Natural killer cell (primary cell): ENCODE measurements at regions of chr10 and their contacts with region 1.

Region 1: GRCh38 chr10:28179006-28179742 is 123.7 kb downstream of the MPP7 start:
- DNase-seq: peak in 1 of 2 donors; percentile 80
- ATAC-seq: peak; percentile 65 to 75 (median 71)
- H3K4me3 ChIP-seq: peak overlapping the region; percentile 24
- H3K4me3 Mint-ChIP-seq: peak overlapping the region; percentile 88
- H3K27ac ChIP-seq: peak overlapping the region; percentile 72
- H3K27ac Mint-ChIP-seq: peak overlapping the region; percentile 89 to 96
- H3K4me1 ChIP-seq: peaks cover 7% of the 10 kb centered on the region
- H3K4me1 Mint-ChIP-seq: peaks cover 22 to 24% of the 10 kb centered on the region in 2 donors
- H3K27me3 ChIP-seq: no peaks in the 10 kb centered on the region
- H3K27me3 Mint-ChIP-seq: no peaks in the 10 kb centered on the region
- CTCF ChIP-seq: peak; percentile 94

Region 2: DNA sequence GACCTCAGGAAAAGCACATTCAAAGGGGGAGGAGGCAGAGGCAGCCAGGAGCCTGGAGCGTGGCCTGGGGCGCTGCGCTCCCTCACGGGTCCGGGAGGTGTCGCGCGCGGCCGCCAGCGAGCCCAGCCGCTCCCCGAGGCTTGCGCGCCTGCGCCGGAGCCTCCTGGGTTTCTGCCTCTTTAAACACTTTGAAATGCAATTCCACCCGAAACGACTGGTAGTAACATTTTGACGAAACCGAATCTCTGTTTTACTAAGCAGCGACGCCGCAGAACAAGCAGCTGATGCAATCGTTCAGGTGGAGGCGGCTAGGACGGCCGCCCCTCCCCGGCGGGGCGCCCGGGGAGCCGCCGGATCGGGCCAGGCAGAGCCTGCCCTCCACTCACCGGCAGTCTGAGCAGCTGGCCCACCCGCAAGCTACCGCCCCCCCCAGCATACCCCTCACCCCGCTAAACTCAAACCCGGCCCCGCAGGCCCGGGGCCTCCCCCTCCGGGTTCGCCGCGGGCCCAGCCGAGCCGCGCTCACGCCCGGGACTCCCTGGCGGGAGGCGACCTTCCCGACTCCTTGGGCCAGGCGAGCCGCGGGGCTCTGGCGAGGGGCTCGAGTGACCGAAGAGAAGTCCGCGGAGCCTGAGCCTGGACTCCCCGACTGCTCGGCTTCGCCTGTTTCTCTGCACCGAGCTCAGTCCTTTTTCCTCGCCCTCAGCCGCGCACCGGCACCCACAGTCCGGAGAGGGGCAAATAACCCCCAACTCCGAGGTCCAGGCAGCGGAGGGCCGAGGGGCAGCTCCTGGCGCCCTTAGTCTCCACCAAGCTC is 436.8 kb before region 1 on chr10:
- intact Hi-C with region 1: loop called (anchors 5 kb)
- DNase-seq: peak; percentile 59 to 81
- ATAC-seq: peak; percentile 81 to 94 (median 90)
- H3K4me3 ChIP-seq: peak overlapping the region; percentile 44
- H3K4me3 Mint-ChIP-seq: peak overlapping the region; percentile 80
- H3K27ac ChIP-seq: no peak overlapping the region
- H3K27ac Mint-ChIP-seq: no peak overlapping the region
- H3K4me1 ChIP-seq: peaks cover 47% of the 10 kb centered on the region
- H3K4me1 Mint-ChIP-seq: peaks cover 19 to 21% of the 10 kb centered on the region in 2 donors
- H3K27me3 ChIP-seq: peaks cover 48% of the 10 kb centered on the region
- H3K27me3 Mint-ChIP-seq: peaks cover 57% of the 10 kb centered on the region in 2 donors
- CTCF ChIP-seq: peak; percentile 71